Endothelial cell of umbilical vein (primary cell): ENCODE measurements at regions of chr15 and their contacts with region 1.

Region 1: DNA sequence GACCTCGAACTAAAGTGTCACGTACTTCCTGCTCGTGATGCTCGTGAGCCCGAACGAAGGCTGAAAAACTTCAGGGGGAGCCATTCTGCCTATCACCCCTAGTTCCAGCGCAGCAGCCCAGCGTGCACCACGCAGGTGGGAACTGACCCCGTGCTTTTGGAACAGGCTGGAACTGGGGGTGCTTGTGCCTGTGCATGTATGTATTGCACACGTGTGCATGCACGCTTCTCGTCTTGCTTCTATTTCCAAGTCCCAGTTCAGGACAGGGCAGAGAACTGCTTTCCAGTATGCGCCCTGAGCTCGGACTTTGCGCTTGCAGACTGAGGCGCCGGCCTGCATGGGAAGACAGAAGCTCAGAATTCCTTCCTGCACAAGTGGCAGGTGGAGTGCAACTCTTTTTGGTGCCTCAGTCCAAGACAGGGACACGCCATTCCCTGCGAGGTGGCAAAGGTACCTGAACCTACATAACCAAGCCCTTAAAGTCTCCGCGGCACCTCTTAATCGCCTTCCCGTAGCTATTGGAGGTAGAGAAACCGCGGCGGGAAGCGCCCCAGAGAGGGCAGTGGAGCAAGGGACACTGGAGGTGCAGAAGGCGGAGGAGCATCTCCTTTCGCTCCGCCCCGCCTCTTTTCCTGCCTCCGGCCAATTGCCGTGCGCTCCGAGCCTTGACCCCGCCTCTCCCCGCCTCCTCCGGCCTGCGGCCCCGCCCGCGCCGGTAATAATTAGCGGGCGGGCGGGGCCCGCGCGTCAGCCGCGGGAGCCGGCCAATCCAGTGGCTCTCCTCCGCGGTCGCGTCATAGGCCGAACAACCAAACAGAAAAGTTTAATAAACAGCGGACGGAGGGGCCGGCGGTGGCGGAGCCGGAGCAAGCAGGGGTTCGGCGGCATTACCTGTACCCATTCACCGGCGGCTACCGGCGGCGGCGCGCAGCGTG is at the start of gene ZFAND6:
- DNase-seq: peak; percentile 93
- H3K4me3 ChIP-seq: peak within 1 kb of the TSS; percentile 54 to 90 (median 89)
- H3K27ac ChIP-seq: peak within 1 kb of the TSS; percentile 87
- H3K4me1 ChIP-seq: peaks cover 18% of the 10 kb centered on the region
- H3K27me3 ChIP-seq: peaks cover 8 to 16% of the 10 kb centered on the region in 2 experiments
- CTCF ChIP-seq: no peak
- POLR2A ChIP-seq: peak; percentile 59
- total RNA-seq, gene ZFAND6: 50.3 and 53.0 TPM in 2 replicates

Region 2: DNA sequence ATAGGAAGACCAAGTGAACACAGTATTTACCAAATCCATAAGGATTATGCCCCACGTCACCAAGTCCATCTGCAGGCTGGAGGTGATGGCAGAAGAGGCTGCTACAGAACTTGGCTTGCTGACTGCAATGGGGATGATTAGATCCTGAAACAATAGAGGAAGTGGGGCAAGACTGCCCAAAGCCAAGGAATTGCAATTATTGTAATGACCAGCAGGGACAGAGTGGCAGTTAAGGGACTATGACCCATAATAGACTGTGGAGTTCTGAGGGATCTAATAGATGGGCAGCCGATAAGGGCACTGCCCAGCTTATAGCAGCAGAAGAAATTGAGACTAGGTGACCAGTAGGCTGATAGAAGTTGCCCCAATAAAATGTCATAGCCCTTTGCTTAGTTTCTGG is 518.6 kb before region 1 on chr15:
- CTCF ChIA-PET with region 1: no interaction called
- POLR2A ChIA-PET with region 1: no interaction called
- dilution Hi-C with region 1: no loop called
- intact Hi-C with region 1: no loop called
- DNase-seq: no peak
- H3K4me3 ChIP-seq: no peak overlapping the region
- H3K27ac ChIP-seq: no peak overlapping the region
- H3K4me1 ChIP-seq: no peaks in the 10 kb centered on the region
- H3K27me3 ChIP-seq: no peaks in the 10 kb centered on the region
- CTCF ChIP-seq: no peak
- POLR2A ChIP-seq: no peak

Region 3: GRCh38 chr15:79896637-79897379 is 162.3 kb before region 1 on chr15 and contains the start of gene MTHFS:
- CTCF ChIA-PET with region 1: no interaction called
- POLR2A ChIA-PET with region 1: no interaction called
- dilution Hi-C with region 1: no loop called
- intact Hi-C with region 1: loop called (anchors 1 kb)
- DNase-seq: peak; percentile 73
- H3K4me3 ChIP-seq: peak within 1 kb of the TSS in 2 of 3 experiments; percentile 53 to 77
- H3K27ac ChIP-seq: peak within 1 kb of the TSS; percentile 46
- H3K4me1 ChIP-seq: peaks cover 8% of the 10 kb centered on the region
- H3K27me3 ChIP-seq: no peaks in the 10 kb centered on the region
- CTCF ChIP-seq: peak; percentile 42 to 65
- POLR2A ChIP-seq: peak; percentile 66
- total RNA-seq, gene MTHFS: 9.9 and 15.7 TPM in 2 replicates

Region 4: DNA sequence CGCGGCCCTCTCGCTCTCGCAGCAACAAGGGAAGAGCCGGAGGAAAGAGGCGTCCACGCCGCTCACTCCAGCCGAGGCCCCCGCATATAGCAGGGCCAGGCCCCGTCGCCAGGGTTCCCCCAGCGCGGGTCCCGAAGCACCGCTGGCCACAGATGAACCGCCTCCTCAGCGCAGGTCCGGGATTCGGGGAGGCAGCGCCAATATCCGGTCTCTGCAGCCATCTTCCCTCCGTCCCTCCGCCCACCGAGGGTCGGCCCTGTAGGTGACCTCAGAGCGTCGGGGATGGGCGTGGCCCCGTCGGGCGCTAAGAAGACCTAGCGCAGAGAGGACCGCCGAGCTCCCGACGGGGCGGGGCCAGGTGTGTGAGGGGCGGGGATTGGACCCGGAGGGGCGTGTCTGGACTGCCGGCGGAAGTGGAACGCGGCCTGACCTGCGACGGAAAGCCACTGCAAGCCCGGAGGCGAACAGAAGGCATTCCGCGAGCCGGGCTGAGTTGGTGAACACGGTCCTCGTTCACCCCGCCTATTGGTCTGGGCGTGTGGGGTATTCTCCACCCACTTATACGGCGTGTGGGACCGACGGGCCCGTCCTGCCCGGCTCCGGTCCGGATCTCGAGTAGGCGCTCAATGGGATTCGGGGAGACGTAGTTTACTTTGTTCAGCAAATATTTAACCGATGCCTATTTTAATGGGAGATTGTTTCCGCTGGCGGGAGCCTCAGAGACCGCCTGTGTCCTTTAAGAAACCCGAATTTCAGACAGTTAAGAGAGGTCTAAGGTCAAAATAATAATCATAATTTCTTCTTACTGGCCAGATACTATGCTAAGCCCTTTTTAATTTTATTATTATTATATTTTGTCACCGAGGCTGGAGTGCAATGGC is 135.4 kb before region 1 on chr15:
- CTCF ChIA-PET with region 1: interaction called, 7 read pairs
- POLR2A ChIA-PET with region 1: interaction called, 3 read pairs
- dilution Hi-C with region 1: no loop called
- intact Hi-C with region 1: loop called (anchors 1 kb)
- DNase-seq: peak; percentile 93
- H3K4me3 ChIP-seq: peak overlapping the region; percentile 87 to 96 (median 92)
- H3K27ac ChIP-seq: peak overlapping the region; percentile 52
- H3K4me1 ChIP-seq: peaks cover 10% of the 10 kb centered on the region
- H3K27me3 ChIP-seq: no peaks in the 10 kb centered on the region
- CTCF ChIP-seq: no peak
- POLR2A ChIP-seq: peak; percentile 85

Region 5: GRCh38 chr15:80072285-80072994 is 13.3 kb after region 1 on chr15:
- CTCF ChIA-PET with region 1: interaction called, 23 read pairs
- POLR2A ChIA-PET with region 1: interaction called, 7 read pairs
- dilution Hi-C with region 1: no loop called
- intact Hi-C with region 1: loop called (anchors 1 kb)
- DNase-seq: peak; percentile 95
- H3K4me3 ChIP-seq: peak overlapping the region; percentile 34 to 98 (median 92)
- H3K27ac ChIP-seq: peak overlapping the region; percentile 32
- H3K4me1 ChIP-seq: peaks cover 16% of the 10 kb centered on the region
- H3K27me3 ChIP-seq: no peaks in the 10 kb centered on the region
- CTCF ChIP-seq: no peak
- POLR2A ChIP-seq: no peak

Region 6: DNA sequence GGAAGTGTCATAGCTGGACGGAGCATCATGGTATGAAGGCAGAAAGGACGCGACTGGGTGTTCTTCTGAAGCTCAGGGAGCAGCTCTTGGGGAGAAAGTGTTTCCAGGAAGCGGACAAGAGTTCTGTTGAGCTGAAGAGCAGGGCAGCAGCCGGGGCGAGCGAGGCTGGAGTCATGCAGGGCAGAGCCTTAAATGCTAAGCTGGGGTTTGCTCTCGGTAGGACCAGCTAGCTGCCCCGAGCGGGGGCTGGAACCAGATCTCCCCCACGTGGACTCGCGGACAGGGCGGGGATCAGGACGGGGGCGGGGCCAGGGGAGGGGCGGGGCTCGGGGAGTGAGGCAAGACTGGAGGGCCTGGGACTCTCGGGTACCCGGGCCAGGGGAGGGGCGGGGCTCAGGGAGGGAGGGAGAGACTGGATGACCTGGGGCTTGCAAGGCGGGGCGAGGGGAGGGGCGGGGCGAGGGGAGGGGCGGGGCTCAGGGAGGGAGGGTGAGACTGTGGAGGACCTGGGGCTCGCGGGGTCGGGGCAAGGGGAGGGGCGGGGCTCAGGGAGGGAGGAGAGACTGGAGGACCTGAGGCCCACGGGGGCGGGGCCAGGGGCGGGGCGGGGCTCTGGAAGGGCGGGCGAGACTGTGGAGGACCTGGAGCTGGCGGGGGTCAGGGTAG is 93.2 kb after region 1 on chr15:
- CTCF ChIA-PET with region 1: interaction called, 4 read pairs
- POLR2A ChIA-PET with region 1: no interaction called
- dilution Hi-C with region 1: no loop called
- intact Hi-C with region 1: loop called (anchors 1 kb)
- DNase-seq: peak; percentile 86
- H3K4me3 ChIP-seq: peak overlapping the region in 2 of 3 experiments; percentile 17 to 75
- H3K27ac ChIP-seq: no peak overlapping the region
- H3K4me1 ChIP-seq: peaks cover 9% of the 10 kb centered on the region
- H3K27me3 ChIP-seq: peaks cover 0 to 2% of the 10 kb centered on the region in 2 experiments
- CTCF ChIP-seq: no peak
- POLR2A ChIP-seq: no peak

Region 7: DNA sequence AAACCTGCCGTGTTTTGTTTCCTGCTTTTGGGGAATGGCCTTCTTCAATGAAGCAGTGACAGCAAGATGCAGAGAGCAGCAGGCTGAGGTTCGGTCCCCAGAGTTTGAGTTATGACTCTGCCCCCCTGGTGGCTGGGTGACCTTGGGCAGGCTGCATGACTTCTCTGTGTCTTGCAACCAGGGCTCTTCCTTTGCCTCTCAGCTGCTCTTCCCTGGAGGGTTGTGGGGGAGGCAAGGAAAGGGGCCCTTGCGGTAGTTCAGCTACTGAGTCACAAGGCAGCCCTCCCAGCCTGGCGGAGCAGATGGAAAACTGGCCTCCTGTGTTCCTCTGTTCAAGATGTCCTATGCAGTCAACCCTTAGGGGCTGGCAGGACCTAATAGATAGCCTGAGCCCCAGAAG is 175.8 kb after region 1 on chr15:
- CTCF ChIA-PET with region 1: no interaction called
- POLR2A ChIA-PET with region 1: no interaction called
- dilution Hi-C with region 1: no loop called
- intact Hi-C with region 1: loop called (anchors 1 kb)
- DNase-seq: peak; percentile 27
- H3K4me3 ChIP-seq: no peak overlapping the region
- H3K27ac ChIP-seq: no peak overlapping the region
- H3K4me1 ChIP-seq: no peaks in the 10 kb centered on the region
- H3K27me3 ChIP-seq: peaks cover 2% of the 10 kb centered on the region in 2 experiments
- CTCF ChIP-seq: peak; percentile 54 to 65
- POLR2A ChIP-seq: no peak